MCF 10A (cell line): ENCODE measurements at regions of chr2 and their contacts with region 1.

Region 1: DNA sequence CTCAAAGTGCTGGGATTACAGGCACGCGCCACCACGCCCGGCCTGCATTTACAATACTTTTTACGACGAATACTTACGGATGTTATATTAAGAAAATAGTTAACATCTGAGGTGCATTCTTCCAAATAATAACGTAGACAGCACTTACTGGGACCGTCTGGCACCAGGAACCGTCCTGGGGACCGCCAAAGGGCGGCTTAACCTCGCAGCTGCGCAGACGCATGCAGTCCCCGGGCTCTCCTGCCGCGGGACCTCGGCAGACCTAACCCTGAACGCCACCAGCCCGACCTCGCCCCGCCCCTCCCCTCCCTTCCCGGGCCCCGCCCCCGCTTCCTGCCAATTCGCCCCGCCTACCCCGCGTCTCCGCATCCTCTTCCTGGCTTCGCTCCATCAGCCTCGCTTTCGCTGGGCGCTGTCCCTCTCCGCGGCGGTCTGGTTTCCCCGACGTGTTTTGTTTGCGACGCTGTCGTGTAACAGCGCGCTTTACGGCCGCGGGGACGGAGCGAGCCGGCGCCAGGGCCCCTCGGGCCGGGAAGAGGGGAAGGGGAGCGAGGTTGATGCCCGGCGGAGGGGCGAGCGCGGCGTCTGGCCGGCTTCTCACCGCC is at the start of gene CNOT11:
- DNase-seq: peak; percentile 97
- H3K4me3 Mint-ChIP-seq: peak within 1 kb of the TSS; percentile 93
- H3K27ac Mint-ChIP-seq: peak within 1 kb of the TSS; percentile 84
- H3K4me1 Mint-ChIP-seq: peaks cover 27% of the 10 kb centered on the region
- H3K27me3 Mint-ChIP-seq: no peaks in the 10 kb centered on the region
- CTCF ChIP-seq: no peak
- total RNA-seq, gene CNOT11: 33.4 and 38.5 TPM in 2 replicates

Region 2: DNA sequence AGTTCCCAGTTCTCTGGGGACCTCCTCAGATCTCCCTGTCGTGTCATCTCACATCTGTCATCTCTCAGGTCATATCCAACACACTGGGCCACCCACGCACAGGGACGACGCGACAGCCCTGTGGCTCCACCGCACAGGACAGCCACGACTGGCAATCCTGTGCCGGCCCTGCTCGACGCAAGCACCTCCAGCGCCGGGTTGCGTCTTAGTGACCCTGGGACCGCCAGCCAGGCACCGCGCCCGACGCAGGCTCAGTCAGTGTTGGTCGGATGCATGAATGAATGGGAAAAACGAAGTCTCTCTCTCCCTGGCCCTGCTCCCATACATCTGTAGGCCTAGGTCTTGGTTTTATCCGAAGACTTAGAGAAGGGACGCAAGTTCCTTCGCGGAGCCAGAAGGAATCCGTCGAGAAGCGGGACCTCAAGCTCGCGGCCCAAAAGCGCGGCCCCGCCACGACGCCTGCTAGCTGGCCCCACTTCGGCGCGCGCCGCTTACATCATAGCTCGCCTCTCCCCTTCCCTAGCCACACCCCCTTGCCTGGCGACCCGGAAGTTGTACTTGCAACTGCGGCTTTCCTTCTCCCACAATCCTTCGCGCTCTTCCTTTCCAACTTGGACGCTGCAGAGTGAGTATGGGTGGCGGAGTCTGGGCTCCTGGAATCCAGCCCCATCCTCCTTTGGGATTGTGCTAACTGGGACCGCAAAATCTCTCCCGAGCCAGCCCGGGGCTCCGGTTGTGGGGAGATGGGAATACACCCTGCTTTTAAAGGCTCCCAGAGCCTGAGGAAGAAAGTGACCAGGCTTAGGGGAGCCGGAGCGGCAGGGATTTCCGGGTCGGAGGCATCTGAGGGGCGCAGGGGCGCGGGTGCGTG is 250.6 kb before region 1 on chr2 and contains the start of gene RPL31:
- CTCF ChIA-PET with region 1: interaction called, 3 read pairs
- POLR2A ChIA-PET with region 1: interaction called, 14 read pairs
- intact Hi-C with region 1: no loop called
- DNase-seq: peak; percentile 98
- H3K4me3 Mint-ChIP-seq: peak within 1 kb of the TSS; percentile 92
- H3K27ac Mint-ChIP-seq: peak within 1 kb of the TSS; percentile 99
- H3K4me1 Mint-ChIP-seq: peaks cover 19% of the 10 kb centered on the region
- H3K27me3 Mint-ChIP-seq: no peaks in the 10 kb centered on the region
- CTCF ChIP-seq: no peak
- total RNA-seq, gene RPL31: 1,648 and 1,732 TPM in 2 replicates

Region 3: DNA sequence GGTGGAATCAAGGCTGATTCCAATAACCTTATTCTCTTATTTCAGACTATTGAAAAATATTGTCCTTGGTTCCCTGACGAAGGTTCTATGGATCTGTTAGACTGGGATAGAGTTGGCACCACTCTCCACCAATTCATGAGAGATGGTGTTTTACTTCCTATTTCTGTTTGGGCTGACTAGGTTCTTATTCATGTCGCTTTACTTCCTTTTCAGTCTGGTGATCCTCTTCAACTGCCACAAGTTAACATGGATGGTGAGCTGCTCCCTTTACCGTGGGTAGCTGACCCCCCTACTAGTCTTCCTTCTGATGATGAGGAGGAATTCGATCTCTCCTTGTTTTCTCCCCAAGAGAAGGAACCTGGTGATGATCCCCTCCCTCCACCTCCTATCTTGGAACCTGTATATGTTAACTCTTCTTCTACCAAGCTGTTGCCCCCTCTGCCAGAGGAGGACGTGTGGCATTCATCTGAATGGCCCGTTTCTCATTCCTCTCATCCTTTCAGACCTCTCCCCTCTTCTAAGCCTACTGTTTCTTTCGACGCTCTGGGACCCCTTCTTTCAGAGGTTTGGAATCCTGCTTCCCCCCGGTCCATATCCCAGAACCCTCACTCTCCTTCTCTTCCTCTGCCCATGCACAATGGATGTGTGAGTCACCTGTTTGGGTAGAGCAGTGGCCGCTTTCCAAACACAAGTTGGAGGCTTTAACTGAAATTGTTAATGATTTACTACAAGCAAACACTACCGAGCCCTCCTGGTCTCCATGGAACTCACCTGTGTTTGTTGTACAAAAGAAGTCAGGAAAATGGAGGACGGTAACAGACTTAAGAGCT is 13.4 kb before region 1 on chr2:
- CTCF ChIA-PET with region 1: interaction called, 31 read pairs
- POLR2A ChIA-PET with region 1: interaction called, 4 read pairs
- intact Hi-C with region 1: no loop called
- DNase-seq: peak; percentile 9
- H3K4me3 Mint-ChIP-seq: no peak overlapping the region
- H3K27ac Mint-ChIP-seq: no peak overlapping the region
- H3K4me1 Mint-ChIP-seq: peaks cover 8% of the 10 kb centered on the region
- H3K27me3 Mint-ChIP-seq: no peaks in the 10 kb centered on the region
- CTCF ChIP-seq: no peak

Region 4: DNA sequence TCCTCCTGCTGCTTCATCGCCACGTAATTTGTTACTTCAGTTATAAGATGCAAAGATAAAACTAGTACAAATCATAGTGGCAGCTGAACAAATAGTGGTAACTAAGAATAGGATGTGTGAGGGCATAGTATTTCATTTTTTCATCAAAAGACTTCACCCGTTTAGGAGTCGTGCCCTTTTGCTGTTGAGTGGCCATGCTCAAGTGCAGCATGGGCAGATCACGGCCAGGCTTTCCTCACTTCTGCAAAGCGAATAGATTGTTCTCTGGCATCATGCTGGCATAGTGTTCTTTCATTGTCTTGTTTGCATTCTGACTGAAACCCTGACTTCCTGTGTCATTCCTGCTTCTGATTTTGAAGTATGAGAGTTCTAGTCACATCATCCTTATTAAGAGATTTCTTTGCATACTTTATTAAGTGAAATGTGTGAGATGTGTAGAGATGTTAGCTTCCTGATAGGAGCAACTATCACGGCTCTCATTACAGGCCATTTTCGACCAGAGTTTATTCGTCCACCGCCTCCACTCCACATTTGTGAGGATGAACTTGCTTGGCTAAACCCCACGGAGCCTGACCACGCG is 11.9 kb after region 1 on chr2:
- CTCF ChIA-PET with region 1: interaction called, 11 read pairs
- POLR2A ChIA-PET with region 1: interaction called, 14 read pairs
- intact Hi-C with region 1: no loop called
- DNase-seq: no peak
- H3K4me3 Mint-ChIP-seq: no peak overlapping the region
- H3K27ac Mint-ChIP-seq: no peak overlapping the region
- H3K4me1 Mint-ChIP-seq: no peaks in the 10 kb centered on the region
- H3K27me3 Mint-ChIP-seq: no peaks in the 10 kb centered on the region
- CTCF ChIP-seq: no peak

Region 5: DNA sequence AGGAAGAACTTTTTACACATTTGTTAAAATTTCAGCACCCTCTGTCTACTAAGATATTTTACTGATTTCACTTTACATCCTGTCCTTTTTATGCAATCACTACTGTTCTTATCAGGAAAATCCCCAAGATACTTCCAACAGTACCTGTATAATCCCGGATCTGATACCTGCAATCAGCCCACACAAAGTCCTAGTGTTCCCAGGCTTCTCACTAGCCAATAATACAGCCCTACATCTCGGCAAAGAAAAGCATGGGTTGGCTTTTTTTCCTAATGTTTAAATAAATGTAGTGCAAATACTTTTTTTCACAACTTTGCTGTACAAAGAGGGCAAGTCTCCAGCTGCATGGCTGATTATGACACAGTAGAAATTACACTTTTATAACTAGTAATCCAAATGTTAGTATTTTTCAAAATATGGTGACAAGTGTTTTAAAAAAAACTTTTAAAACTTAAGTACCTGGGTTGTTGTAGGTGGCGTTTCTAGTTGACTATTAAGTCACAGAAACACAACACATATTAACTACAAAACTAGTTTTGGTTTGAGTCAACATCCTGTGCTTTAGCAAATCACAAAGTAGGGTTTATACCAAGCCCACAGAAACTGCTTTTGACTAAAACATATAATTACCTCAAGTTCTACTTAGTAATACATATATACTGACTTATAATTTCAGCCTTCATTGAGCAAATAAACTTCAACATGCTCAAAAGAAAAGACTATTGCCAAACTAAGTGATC is 19.7 kb after region 1 on chr2:
- CTCF ChIA-PET with region 1: interaction called, 11 read pairs
- POLR2A ChIA-PET with region 1: interaction called, 10 read pairs
- intact Hi-C with region 1: no loop called
- DNase-seq: no peak
- H3K4me3 Mint-ChIP-seq: no peak overlapping the region
- H3K27ac Mint-ChIP-seq: no peak overlapping the region
- H3K4me1 Mint-ChIP-seq: no peaks in the 10 kb centered on the region
- H3K27me3 Mint-ChIP-seq: no peaks in the 10 kb centered on the region
- CTCF ChIP-seq: no peak

Region 6: GRCh38 chr2:101287303-101287702 is 34.8 kb after region 1 on chr2:
- CTCF ChIA-PET with region 1: no interaction called
- POLR2A ChIA-PET with region 1: no interaction called
- intact Hi-C with region 1: no loop called
- DNase-seq: no peak
- H3K4me3 Mint-ChIP-seq: no peak overlapping the region
- H3K27ac Mint-ChIP-seq: no peak overlapping the region
- H3K4me1 Mint-ChIP-seq: no peaks in the 10 kb centered on the region
- H3K27me3 Mint-ChIP-seq: no peaks in the 10 kb centered on the region
- CTCF ChIP-seq: no peak

Region 7: DNA sequence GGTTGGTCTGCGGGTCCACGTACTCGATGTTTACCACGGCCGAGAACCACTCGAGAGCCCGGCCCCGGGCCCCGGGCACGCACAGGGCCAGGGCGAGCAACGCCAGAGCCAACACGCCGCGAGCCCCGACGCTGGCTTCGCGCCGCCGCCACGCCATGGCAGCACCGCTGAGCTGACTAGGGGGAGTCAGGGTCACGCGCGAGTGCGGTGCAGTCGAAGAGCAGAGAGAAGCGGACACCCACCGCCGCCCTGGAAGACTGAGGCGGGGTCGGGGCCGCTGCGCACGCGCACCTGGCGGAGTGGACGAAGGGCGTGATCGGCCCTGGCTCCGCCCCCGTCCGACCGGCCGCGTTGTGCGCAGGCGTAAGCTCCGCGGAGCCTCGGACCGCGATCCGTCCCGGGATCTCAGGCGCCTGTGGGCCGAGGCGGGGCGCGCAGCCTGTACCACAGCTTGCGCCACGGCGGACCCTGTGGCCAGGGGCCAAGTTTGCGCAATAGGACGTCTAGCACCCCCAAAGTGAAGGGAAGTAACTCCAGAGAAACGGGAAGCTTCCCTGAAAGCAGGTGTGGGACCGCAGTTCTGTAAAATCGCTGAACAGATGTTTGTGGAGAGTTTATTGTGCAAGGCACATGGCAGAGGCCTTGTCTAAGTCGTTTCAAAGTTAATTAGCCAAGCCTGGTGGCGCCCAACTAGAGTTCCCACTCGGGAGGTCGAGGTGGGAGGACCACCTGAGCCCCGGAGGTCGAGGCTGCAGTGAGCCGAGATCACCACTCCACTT is 56.1 kb after region 1 on chr2 and contains the start of gene RNF149:
- CTCF ChIA-PET with region 1: no interaction called
- POLR2A ChIA-PET with region 1: interaction called, 23 read pairs
- intact Hi-C with region 1: loop called (anchors 5 kb)
- DNase-seq: peak; percentile 90
- H3K4me3 Mint-ChIP-seq: peak within 1 kb of the TSS; percentile 86
- H3K27ac Mint-ChIP-seq: peak within 1 kb of the TSS; percentile 82
- H3K4me1 Mint-ChIP-seq: peaks cover 22% of the 10 kb centered on the region
- H3K27me3 Mint-ChIP-seq: no peaks in the 10 kb centered on the region
- CTCF ChIP-seq: no peak
- total RNA-seq, gene RNF149: 34.7 and 34.8 TPM in 2 replicates